ENCODE measurements at regions of chr12 and their contacts with region 1.

Region 1: GRCh38 chr12:98516184-98516873 is 939 bp downstream of the TMPO start:
- DNase-seq: peak; percentile 96
- H3K4me3 Mint-ChIP-seq: peak overlapping the region; percentile 92
- H3K27ac Mint-ChIP-seq: peak overlapping the region; percentile 99
- H3K4me1 Mint-ChIP-seq: peaks cover 37% of the 10 kb centered on the region
- H3K27me3 Mint-ChIP-seq: no peaks in the 10 kb centered on the region

Region 2: GRCh38 chr12:98490501-98491453 is 25.6 kb before region 1 on chr12:
- CTCF ChIA-PET with region 1: interaction called, 34 read pairs
- intact Hi-C with region 1: loop called (anchors 1 kb)
- DNase-seq: peak; percentile 91
- H3K4me3 Mint-ChIP-seq: peak overlapping the region; percentile 59
- H3K27ac Mint-ChIP-seq: peak overlapping the region; percentile 87
- H3K4me1 Mint-ChIP-seq: peaks cover 4% of the 10 kb centered on the region
- H3K27me3 Mint-ChIP-seq: no peaks in the 10 kb centered on the region

Region 3: DNA sequence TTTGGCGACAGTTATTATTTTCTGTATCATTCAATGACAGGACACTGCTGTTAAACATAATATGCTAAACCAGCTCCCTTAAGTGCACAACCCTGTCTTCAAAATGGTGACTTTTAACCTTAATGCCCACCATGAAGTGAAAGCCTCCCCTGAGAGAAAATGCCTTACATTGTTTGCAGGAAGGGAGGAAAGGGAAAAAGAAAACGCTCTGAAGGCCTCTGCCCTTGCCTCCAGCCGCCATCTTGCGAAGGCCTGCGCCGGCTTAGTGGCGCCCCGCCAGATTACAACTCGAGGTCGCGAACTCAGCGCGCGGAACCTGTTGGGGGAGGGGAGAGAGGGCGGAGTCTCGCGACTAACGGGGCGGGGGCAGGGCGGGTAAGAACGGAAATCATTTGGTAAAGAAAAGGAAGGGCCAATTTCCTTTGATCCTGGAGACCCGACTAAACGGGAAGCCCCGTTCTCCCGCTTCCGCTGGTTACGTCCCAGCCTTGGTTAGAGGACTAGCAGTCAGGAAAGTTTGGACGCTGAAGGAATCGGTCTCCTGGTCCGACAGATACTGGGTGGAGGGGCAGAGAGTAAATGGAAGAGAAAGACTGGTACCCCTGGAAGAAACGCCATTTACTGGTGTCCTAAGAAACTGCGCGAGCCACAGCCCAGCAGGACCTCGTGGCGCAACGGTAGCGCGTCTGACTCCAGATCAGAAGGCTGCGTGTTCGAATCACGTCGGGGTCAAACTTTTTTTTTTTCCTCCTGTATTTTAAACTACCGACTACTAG is 12.5 kb before region 1 on chr12:
- CTCF ChIA-PET with region 1: interaction called, 7 read pairs
- intact Hi-C with region 1: loop called (anchors 1 kb)
- DNase-seq: peak; percentile 97
- H3K4me3 Mint-ChIP-seq: peak overlapping the region; percentile 97
- H3K27ac Mint-ChIP-seq: peak overlapping the region; percentile 100
- H3K4me1 Mint-ChIP-seq: peaks cover 16% of the 10 kb centered on the region
- H3K27me3 Mint-ChIP-seq: peaks cover 8% of the 10 kb centered on the region

Region 4: GRCh38 chr12:98532681-98533304 is 16.5 kb after region 1 on chr12:
- CTCF ChIA-PET with region 1: interaction called, 7 read pairs
- intact Hi-C with region 1: loop called (anchors 1 kb)
- DNase-seq: no peak
- H3K4me3 Mint-ChIP-seq: no peak overlapping the region
- H3K27ac Mint-ChIP-seq: no peak overlapping the region
- H3K4me1 Mint-ChIP-seq: peaks cover 14% of the 10 kb centered on the region
- H3K27me3 Mint-ChIP-seq: no peaks in the 10 kb centered on the region

Region 5: GRCh38 chr12:98828802-98829600 is 312.7 kb after region 1 on chr12:
- CTCF ChIA-PET with region 1: no interaction called
- intact Hi-C with region 1: no loop called
- DNase-seq: no peak
- H3K4me3 Mint-ChIP-seq: no peak overlapping the region
- H3K27ac Mint-ChIP-seq: no peak overlapping the region
- H3K4me1 Mint-ChIP-seq: no peaks in the 10 kb centered on the region
- H3K27me3 Mint-ChIP-seq: peaks cover 4% of the 10 kb centered on the region

Measured in activated naive CD4-positive, alpha-beta T cell treated with anti-CD3 and anti-CD28 coated beads for 36 hours (primary cell).